ENCODE measurements at regions of chr6 and their contacts with region 1.

Region 1: DNA sequence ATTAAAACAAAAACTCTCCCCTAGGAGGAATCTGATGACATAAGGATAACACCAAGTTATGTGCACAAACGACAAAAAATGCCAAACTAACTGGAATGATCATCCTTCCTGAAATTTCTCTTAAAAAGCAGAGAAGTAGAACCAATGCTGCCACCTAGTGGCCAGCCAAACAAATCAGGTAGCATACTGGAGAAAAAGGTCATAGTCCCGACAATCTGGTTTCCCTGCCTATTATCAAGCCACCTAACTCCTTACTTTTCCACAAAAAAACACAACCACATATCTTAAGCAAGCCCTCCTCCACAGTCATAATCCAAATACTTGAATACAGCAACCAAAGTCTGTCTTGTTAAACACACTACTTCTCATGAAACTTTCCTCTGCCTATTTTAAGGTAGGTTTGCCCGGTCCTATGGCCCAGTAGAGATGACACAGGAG is 5.3 kb downstream of the OARD1 start:
- DNase-seq: peak; percentile 77
- H3K4me3 Mint-ChIP-seq: no peak overlapping the region
- H3K27ac Mint-ChIP-seq: peak overlapping the region; percentile 71
- H3K4me1 Mint-ChIP-seq: peaks cover 56% of the 10 kb centered on the region
- H3K27me3 Mint-ChIP-seq: no peaks in the 10 kb centered on the region
- CTCF ChIP-seq: peak; percentile 79

Region 2: DNA sequence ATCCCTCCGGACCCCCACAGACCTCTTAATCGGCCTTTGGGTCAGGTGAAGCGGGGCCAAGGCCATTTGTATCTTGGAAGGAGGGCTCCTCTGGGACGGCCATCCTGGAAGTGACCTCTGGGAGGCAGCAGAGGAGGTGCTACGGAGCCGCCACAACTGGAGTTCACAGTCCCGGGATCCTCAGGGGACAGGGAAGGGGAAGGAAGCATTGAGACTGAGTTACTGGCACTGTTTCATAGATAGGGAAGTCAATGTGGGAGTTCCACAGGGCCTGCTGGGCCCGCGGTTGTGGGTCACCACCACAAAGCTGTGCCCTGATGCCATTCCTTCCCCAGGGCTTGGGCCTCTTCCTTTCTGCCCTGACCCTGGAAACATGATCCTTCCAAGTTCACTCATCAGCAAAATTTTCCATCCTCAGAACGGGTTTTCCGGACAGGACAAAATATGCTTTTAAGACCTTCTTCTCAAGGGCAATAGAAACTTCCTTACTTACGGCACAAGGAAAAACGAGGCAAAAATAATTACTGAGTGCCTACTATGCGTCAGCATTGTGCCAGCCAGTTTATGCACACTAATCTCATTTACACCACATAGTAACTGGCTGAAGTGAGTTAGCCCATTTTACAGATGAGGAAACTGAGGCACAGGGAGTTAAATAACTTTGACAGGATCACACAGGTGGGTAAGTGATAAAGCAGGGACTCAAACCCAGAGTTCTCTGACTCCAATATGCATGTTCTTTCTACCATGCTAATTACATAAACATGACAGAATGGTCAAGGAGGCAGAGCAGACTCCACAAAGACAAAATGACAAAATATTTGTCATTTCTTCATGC is 171.7 kb before region 1 on chr6:
- CTCF ChIA-PET with region 1: interaction called, 3 read pairs
- intact Hi-C with region 1: loop called (anchors 2 kb)
- DNase-seq: peak; percentile 74
- H3K4me3 Mint-ChIP-seq: no peak overlapping the region
- H3K27ac Mint-ChIP-seq: no peak overlapping the region
- H3K4me1 Mint-ChIP-seq: no peaks in the 10 kb centered on the region
- H3K27me3 Mint-ChIP-seq: peaks cover 30% of the 10 kb centered on the region
- CTCF ChIP-seq: peak; percentile 71

Region 3: GRCh38 chr6:40922281-40922680 is 144.6 kb before region 1 on chr6:
- CTCF ChIA-PET with region 1: no interaction called
- intact Hi-C with region 1: no loop called
- DNase-seq: no peak
- H3K4me3 Mint-ChIP-seq: no peak overlapping the region
- H3K27ac Mint-ChIP-seq: no peak overlapping the region
- H3K4me1 Mint-ChIP-seq: no peaks in the 10 kb centered on the region
- H3K27me3 Mint-ChIP-seq: peaks cover 60% of the 10 kb centered on the region
- CTCF ChIP-seq: no peak

Region 4: GRCh38 chr6:41027799-41028628 is 38.9 kb before region 1 on chr6:
- CTCF ChIA-PET with region 1: interaction called, 5 read pairs
- intact Hi-C with region 1: loop called (anchors 5 kb)
- DNase-seq: peak; percentile 90
- H3K4me3 Mint-ChIP-seq: no peak overlapping the region
- H3K27ac Mint-ChIP-seq: no peak overlapping the region
- H3K4me1 Mint-ChIP-seq: peaks cover 17% of the 10 kb centered on the region
- H3K27me3 Mint-ChIP-seq: no peaks in the 10 kb centered on the region
- CTCF ChIP-seq: peak; percentile 97

Region 5: GRCh38 chr6:41039060-41039998 is 27.6 kb before region 1 on chr6 and contains the start of gene UNC5CL:
- CTCF ChIA-PET with region 1: interaction called, 15 read pairs
- intact Hi-C with region 1: loop called (anchors 1 kb)
- DNase-seq: peak; percentile 91
- H3K4me3 Mint-ChIP-seq: peak within 1 kb of the TSS; percentile 73
- H3K27ac Mint-ChIP-seq: peak within 1 kb of the TSS; percentile 90
- H3K4me1 Mint-ChIP-seq: peaks cover 58% of the 10 kb centered on the region
- H3K27me3 Mint-ChIP-seq: no peaks in the 10 kb centered on the region
- CTCF ChIP-seq: peak; percentile 76
- total RNA-seq, gene UNC5CL: 10.6 and 15.9 TPM in 2 replicates

Region 6: DNA sequence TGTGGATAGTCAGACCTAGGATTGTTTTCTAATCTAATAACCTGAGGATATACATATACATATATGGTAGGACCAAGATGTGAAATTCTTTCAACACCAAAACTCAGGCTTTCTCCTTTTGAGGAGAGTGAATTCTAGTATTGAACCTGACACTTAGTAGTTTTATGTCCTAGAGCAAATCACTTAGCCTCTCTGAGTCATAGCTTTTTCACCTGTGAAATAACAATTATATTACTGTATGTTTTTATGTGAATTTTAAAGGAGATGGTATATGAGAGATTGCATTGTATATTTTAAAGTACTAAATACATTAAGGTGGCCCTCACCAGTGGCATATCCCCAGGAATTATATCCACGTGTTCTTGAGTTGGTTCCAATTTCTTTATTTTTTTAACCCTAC is 52.6 kb after region 1 on chr6:
- CTCF ChIA-PET with region 1: no interaction called
- intact Hi-C with region 1: no loop called
- DNase-seq: no peak
- H3K4me3 Mint-ChIP-seq: no peak overlapping the region
- H3K27ac Mint-ChIP-seq: no peak overlapping the region
- H3K4me1 Mint-ChIP-seq: no peaks in the 10 kb centered on the region
- H3K27me3 Mint-ChIP-seq: no peaks in the 10 kb centered on the region
- CTCF ChIP-seq: no peak